Mammary epithelial cell (primary cell): ENCODE measurements at regions of chr11 and their contacts with region 1.

Region 1: DNA sequence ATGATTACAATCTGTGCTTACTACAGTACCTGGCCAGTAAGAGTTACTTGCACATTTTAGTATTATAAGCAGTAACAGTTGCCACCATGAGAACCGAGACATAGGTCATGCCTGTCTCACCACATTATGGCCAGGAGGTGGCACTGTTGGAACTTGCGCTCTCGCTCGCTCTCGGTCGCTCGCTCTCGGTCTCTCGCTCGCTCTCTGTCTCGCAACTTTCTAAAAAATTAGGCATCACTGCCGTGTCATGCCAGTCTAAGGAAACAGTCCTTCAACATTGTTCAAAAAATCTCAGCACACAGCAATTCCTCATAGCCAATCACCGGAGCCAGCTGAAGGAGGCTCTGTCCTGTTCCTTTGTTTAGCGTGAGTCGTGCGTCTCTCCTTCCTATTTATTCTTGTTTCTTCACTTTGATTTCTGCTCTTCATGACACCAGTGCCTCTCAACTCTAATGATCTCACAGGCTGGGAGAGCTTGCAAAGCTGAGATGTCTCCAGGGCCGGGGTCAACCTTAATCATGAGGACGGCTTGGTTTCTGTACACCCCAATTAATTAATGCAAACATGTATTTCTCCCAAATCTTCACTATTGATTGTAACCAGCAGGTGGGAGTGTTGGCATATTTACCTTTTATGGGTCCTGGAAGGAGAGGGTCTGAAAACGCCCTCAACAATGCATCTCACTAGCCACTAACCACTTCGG is 6.3 kb upstream of the ADAMTS8 start:
- DNase-seq: peak; percentile 73
- H3K4me3 ChIP-seq: peak overlapping the region; percentile 67 to 69 (median 68)
- H3K27ac ChIP-seq: peak overlapping the region; percentile 72
- H3K4me1 ChIP-seq: peaks cover 27% of the 10 kb centered on the region
- H3K27me3 ChIP-seq: peaks cover 5% of the 10 kb centered on the region
- CTCF ChIP-seq: peak; percentile 89 to 91

Region 2: GRCh38 chr11:130330101-130330684 is 104.5 kb before region 1 on chr11:
- CTCF ChIA-PET with region 1: no interaction called
- dilution Hi-C with region 1: no loop called
- in situ Hi-C with region 1: no loop called
- intact Hi-C with region 1: no loop called
- DNase-seq: no peak
- H3K4me3 ChIP-seq: no peak overlapping the region
- H3K27ac ChIP-seq: no peak overlapping the region
- H3K4me1 ChIP-seq: no peaks in the 10 kb centered on the region
- H3K27me3 ChIP-seq: no peaks in the 10 kb centered on the region
- CTCF ChIP-seq: no peak

Region 3: GRCh38 chr11:130536106-130537040 is 101.7 kb after region 1 on chr11:
- CTCF ChIA-PET with region 1: no interaction called
- dilution Hi-C with region 1: no loop called
- in situ Hi-C with region 1: no loop called
- intact Hi-C with region 1: loop called (anchors 5 kb)
- DNase-seq: peak; percentile 58
- H3K4me3 ChIP-seq: no peak overlapping the region
- H3K27ac ChIP-seq: no peak overlapping the region
- H3K4me1 ChIP-seq: peaks cover 8% of the 10 kb centered on the region
- H3K27me3 ChIP-seq: no peaks in the 10 kb centered on the region
- CTCF ChIP-seq: no peak

Region 4: GRCh38 chr11:130631119-130631518 is 196.4 kb after region 1 on chr11:
- CTCF ChIA-PET with region 1: no interaction called
- dilution Hi-C with region 1: no loop called
- in situ Hi-C with region 1: no loop called
- intact Hi-C with region 1: loop called (anchors 1 kb)
- DNase-seq: peak; percentile 95
- H3K4me3 ChIP-seq: no peak overlapping the region
- H3K27ac ChIP-seq: peak overlapping the region; percentile 49
- H3K4me1 ChIP-seq: peaks cover 66% of the 10 kb centered on the region
- H3K27me3 ChIP-seq: no peaks in the 10 kb centered on the region
- CTCF ChIP-seq: no peak

Region 5: GRCh38 chr11:130644187-130644586 is 209.5 kb after region 1 on chr11:
- CTCF ChIA-PET with region 1: no interaction called
- dilution Hi-C with region 1: no loop called
- in situ Hi-C with region 1: no loop called
- intact Hi-C with region 1: no loop called
- DNase-seq: peak; percentile 39
- H3K4me3 ChIP-seq: no peak overlapping the region
- H3K27ac ChIP-seq: no peak overlapping the region
- H3K4me1 ChIP-seq: peaks cover 10% of the 10 kb centered on the region
- H3K27me3 ChIP-seq: no peaks in the 10 kb centered on the region
- CTCF ChIP-seq: no peak

Region 6: DNA sequence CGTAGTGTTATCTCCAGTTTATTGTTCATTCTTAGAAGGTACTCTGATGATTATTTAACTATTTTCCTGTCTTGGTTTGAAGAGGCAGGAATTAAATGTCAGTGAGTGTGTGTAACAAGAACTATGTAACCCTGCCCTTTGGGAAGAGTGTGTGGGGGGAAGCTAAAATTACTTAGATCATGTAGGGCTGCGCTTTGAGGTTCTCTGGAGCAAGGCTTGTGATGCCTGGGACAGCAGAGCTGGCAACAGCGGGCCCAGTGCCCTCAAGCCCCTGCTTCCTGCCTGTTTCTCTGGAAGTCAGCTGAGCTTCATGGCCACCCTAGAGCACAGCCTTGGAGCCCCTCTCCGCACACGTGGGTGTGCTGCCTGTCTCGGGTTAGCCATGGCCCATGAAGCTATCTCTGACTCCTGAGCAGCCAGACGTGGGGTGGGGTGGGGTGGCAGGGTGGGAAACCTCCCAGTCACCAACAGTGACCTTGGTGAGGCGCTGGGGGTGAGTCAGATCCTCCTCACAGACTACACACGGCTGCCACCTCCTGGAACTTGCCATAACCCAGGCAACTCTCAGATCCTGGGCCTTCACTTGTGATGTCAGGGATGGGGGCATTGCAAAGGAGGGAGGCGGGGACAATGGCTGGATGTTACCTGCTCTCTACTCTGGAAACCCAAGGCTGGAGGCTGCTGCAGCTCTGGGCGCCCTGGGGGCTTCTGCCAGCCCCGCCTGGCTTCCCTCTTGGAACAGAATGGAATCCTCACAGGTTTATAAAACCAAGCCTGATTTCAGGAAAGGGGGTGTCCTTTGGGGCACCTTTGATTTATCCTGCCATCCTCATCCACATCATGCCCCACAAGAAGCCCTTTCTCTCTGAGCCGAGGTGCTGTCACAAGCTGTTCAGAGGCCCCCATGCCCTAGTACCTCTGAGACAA is 393.0 kb after region 1 on chr11:
- CTCF ChIA-PET with region 1: interaction called, 3 read pairs
- dilution Hi-C with region 1: no loop called
- in situ Hi-C with region 1: loop called in 1 of 2 experiments (anchors 5 kb)
- intact Hi-C with region 1: loop called (anchors 1 kb)
- DNase-seq: peak; percentile 73
- H3K4me3 ChIP-seq: no peak overlapping the region
- H3K27ac ChIP-seq: no peak overlapping the region
- H3K4me1 ChIP-seq: no peaks in the 10 kb centered on the region
- H3K27me3 ChIP-seq: no peaks in the 10 kb centered on the region
- CTCF ChIP-seq: peak; percentile 65 to 80

Region 7: DNA sequence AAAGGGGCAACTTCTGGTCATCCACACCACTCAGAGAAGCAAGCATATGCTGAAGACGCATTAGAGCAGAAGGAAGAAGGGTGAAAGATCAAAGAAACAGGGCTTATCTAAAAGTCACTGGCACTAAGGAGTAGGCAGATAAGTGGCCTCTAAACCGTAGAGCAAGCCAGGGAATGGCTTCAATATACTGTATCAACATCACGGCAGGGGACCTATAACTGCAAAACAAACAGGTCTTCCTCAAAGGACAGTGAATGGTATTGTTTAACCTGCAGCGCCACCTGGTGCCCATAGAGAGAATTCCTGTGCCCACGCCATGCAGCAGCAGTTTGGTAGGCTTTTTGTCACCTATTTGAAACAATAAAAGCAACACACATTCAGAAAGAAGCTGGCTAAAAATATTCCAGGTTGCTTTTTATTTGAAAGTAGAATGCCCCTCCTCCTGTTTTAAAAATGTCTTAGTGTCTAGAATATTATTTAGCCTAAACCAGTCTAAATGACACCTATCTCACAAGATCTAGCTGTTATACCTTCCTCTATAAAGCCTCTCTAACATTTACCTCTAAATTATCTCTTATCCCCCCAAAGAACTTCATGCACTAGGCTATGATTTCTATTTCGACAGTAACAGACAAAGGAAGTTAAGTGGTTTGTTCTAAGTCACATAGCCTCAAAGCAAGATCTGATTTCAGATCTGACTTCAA is 459.8 kb after region 1 on chr11:
- CTCF ChIA-PET with region 1: interaction called, 4 read pairs
- dilution Hi-C with region 1: no loop called
- in situ Hi-C with region 1: loop called in 1 of 2 experiments (anchors 10 kb)
- intact Hi-C with region 1: loop called (anchors 1 kb)
- DNase-seq: peak; percentile 46
- H3K4me3 ChIP-seq: no peak overlapping the region
- H3K27ac ChIP-seq: no peak overlapping the region
- H3K4me1 ChIP-seq: peaks cover 18% of the 10 kb centered on the region
- H3K27me3 ChIP-seq: no peaks in the 10 kb centered on the region
- CTCF ChIP-seq: peak; percentile 86 to 98

Region 8: GRCh38 chr11:130916238-130916855 is 481.7 kb after region 1 on chr11 and contains the start of gene SNX19:
- CTCF ChIA-PET with region 1: no interaction called
- dilution Hi-C with region 1: no loop called
- in situ Hi-C with region 1: no loop called
- intact Hi-C with region 1: no loop called
- DNase-seq: peak; percentile 87
- H3K4me3 ChIP-seq: peak within 1 kb of the TSS; percentile 66 to 86 (median 84)
- H3K27ac ChIP-seq: peak within 1 kb of the TSS; percentile 62
- H3K4me1 ChIP-seq: peaks cover 13% of the 10 kb centered on the region
- H3K27me3 ChIP-seq: peaks cover 2% of the 10 kb centered on the region
- CTCF ChIP-seq: peak; percentile 76 to 88
- total RNA-seq, gene SNX19: 56.4 to 112 TPM

Region 9: GRCh38 chr11:130979386-130979972 is 544.8 kb after region 1 on chr11:
- CTCF ChIA-PET with region 1: interaction called, 4 read pairs
- dilution Hi-C with region 1: no loop called
- in situ Hi-C with region 1: no loop called
- intact Hi-C with region 1: loop called (anchors 5 kb)
- DNase-seq: peak; percentile 36
- H3K4me3 ChIP-seq: no peak overlapping the region
- H3K27ac ChIP-seq: no peak overlapping the region
- H3K4me1 ChIP-seq: no peaks in the 10 kb centered on the region
- H3K27me3 ChIP-seq: no peaks in the 10 kb centered on the region
- CTCF ChIP-seq: peak; percentile 63 to 72

Region 10: DNA sequence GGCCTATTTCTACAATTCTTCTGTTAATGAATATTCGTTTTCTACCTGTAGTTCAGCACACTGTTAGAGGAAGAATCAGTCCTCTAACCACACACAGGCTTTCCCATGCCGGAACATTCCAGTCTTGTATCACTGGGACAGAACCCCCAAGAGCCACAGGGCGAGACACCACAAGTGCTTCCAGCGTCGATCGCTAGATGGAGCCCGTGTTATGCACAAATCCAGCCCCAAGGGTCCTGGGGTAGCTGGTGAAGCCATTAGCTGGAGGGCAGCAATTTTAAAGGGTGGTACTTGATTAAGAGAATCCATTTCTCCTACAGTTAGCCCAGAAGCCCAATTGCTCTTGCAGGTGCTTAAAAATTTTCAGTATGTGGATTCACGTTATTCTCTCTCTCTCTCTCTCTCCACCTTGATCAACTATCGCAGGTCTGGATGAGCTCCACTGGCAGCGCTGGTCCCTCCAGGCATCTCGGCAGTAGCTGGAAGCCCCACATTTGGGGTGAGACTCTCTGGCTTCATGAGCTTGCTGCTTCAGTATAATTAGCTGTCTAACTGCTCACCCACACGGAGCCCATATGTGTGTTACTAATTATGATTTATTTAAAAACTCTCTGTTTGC is 629.8 kb after region 1 on chr11:
- CTCF ChIA-PET with region 1: no interaction called
- dilution Hi-C with region 1: no loop called
- in situ Hi-C with region 1: no loop called
- intact Hi-C with region 1: loop called (anchors 5 kb)
- DNase-seq: peak; percentile 43
- H3K4me3 ChIP-seq: no peak overlapping the region
- H3K27ac ChIP-seq: no peak overlapping the region
- H3K4me1 ChIP-seq: no peaks in the 10 kb centered on the region
- H3K27me3 ChIP-seq: no peaks in the 10 kb centered on the region
- CTCF ChIP-seq: peak; percentile 97